GM12878 (cell line): ENCODE measurements at regions of chr14 and their contacts with region 1.

Region 1: DNA sequence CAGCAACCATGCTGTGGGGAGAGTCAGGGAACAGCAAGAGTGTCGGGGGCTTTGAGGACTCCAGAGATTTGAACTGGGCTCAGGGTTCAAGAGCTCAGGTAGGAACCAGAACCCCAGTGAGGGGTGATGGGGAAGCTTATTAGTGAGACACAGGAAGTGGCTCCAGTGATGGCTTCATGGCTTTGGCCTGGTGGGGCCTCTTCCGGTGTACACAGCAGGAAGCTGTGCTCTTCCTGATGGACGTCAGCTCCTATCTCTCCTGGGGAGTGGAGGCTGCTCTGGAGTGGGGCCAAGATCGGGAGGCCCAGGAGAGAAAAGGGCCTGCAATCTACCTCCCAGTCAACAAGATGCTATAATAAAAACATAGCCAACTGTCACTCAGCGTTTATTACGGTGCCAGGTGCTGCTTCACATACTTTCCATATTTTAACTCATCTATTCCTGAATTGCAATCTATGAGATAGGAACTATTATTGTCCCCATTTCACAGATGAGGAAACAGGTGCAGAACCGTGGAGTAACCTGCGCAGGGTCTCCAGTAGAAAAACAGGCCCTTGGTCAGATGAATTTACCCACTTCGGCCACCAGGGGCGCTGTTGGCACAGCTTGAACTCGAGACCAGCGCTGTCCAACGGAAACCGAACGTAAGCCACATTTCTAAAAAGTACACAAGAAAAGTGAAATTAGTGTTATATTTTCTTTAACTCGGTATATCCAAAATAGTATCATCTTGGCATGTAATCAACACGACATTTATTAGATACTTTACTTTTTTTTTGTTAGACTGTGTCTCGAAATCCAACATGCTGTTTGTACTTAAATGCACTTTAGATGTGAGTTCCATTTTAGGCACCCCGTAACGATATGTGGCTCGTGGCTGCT is 63.6 kb upstream of the DLK1 start:
- DNase-seq: no peak
- ATAC-seq: peak; percentile 68
- H3K4me3 ChIP-seq: no peak overlapping the region
- H3K27ac ChIP-seq: no peak overlapping the region
- H3K4me1 ChIP-seq: no peaks in the 10 kb centered on the region
- H3K27me3 ChIP-seq: no peaks in the 10 kb centered on the region; a peak in 1 of 4 replicates
- CTCF ChIP-seq: peak; percentile 61 to 82 (median 74)
- EP300 ChIP-seq: no peak
- POLR2A ChIP-seq: no peak
- RAD21 ChIP-seq: peak; percentile 36; the same call in 1 of the 2 replicates

Region 2: DNA sequence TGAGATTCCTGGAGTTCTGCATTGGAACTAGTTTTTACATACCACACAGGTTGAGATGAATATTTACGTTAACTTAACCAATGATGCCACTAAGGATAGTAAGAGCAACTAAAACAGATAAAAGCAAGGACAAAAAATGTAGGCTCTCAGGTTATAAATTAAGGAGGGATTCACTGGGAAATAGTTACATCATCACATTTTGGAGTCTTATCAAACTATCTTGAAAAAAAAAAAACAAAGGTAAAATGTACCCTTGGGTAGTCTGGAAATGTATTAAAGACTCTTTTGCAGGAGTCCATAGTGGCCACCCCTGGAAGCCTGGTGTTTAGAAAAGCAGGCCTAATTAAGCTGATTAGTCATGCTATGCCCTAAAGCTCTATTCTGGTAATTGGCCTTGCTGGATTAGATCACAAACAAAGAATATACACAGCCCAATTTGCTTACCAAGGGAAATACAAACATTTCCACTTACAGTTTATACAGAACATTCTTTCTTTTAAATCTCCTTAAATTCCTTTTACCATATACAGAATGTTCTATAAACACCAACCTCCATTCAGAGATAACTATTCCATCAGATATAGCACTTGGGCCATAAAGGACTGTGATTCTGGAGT is 300.7 kb before region 1 on chr14:
- CTCF ChIA-PET with region 1: no interaction called
- POLR2A ChIA-PET with region 1: no interaction called
- RAD21 ChIA-PET with region 1: no interaction called
- SMC1A ChIA-PET with region 1: no interaction called
- in situ Hi-C with region 1: no loop called
- intact Hi-C with region 1: no loop called
- DNase-seq: no peak
- ATAC-seq: no peak
- H3K4me3 ChIP-seq: no peak overlapping the region
- H3K27ac ChIP-seq: no peak overlapping the region
- H3K4me1 ChIP-seq: no peaks in the 10 kb centered on the region; the same call in 1 of the 2 replicates
- H3K27me3 ChIP-seq: no peaks in the 10 kb centered on the region
- CTCF ChIP-seq: no peak
- EP300 ChIP-seq: no peak
- POLR2A ChIP-seq: no peak
- RAD21 ChIP-seq: no peak

Region 3: DNA sequence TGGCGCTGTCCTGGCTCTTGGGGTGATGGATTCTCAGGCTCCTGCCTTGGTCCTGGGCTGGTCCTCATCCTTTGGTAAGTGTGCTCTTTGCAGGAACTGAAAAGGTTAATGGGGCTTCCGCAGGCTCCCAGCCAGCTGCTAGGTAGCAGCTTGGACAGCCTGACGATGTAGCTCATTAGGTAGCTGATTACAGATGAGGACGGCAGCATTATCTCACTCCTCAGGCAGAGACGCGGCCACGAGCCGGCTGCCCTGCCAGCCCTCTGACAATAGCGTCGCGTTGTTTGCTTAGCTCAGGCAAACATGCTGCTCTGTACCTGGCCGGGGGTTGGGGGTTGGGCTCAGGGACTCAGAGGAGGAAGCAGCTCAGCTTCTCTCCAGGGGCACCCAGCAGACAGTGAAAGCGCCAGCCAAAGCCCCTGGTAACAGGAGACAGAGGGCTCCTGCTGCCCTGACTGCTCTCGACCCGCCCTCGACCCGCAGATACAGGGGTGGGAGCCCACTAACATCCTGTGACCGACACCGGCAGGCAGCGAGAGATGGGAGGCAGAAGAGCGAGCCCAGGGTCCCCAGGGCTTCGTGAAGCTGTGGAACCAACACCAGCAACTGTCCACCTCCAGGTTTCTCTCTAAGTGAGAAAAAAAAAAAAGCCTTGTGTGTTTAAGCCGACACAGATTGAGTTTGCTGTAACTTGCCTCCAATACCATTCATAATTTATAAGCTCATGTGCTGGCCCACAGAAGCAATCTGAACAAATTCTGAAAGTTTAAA is 10.1 kb after region 1 on chr14:
- CTCF ChIA-PET with region 1: interaction called, 12 read pairs
- POLR2A ChIA-PET with region 1: no interaction called
- RAD21 ChIA-PET with region 1: no interaction called
- SMC1A ChIA-PET with region 1: no interaction called
- in situ Hi-C with region 1: no loop called
- intact Hi-C with region 1: no loop called
- DNase-seq: no peak
- ATAC-seq: no peak
- H3K4me3 ChIP-seq: no peak overlapping the region
- H3K27ac ChIP-seq: no peak overlapping the region
- H3K4me1 ChIP-seq: no peaks in the 10 kb centered on the region
- H3K27me3 ChIP-seq: peaks cover 0 to 3% of the 10 kb centered on the region in 2 experiments; a peak in 3 of 4 replicates
- CTCF ChIP-seq: no peak
- EP300 ChIP-seq: no peak
- POLR2A ChIP-seq: no peak
- RAD21 ChIP-seq: no peak